Thyroid gland (tissue), 4 donors: ENCODE measurements at regions of chr14 and their contacts with region 1.

Region 1: GRCh38 chr14:64671591-64671990 is 32.6 kb upstream of the PLEKHG3 start:
- DNase-seq: no peak
- H3K4me3 ChIP-seq: no peak overlapping the region
- H3K27ac ChIP-seq: no peak overlapping the region
- H3K4me1 ChIP-seq: peaks cover 0 to 11% of the 10 kb centered on the region in 2 donors
- H3K27me3 ChIP-seq: no peaks in the 10 kb centered on the region
- CTCF ChIP-seq: peak; percentile 22 to 88 (median 76)
- POLR2A ChIP-seq: no peak

Region 2: GRCh38 chr14:64764641-64765520 is 93.3 kb after region 1 on chr14:
- intact Hi-C with region 1: loop called (anchors 2 kb)
- DNase-seq: peak; percentile 65 to 74
- H3K4me3 ChIP-seq: no peak overlapping the region
- H3K27ac ChIP-seq: no peak overlapping the region
- H3K4me1 ChIP-seq: peaks cover 19 to 32% of the 10 kb centered on the region in 2 donors
- H3K27me3 ChIP-seq: no peaks in the 10 kb centered on the region
- CTCF ChIP-seq: peak; percentile 86 to 94 (median 90)
- POLR2A ChIP-seq: no peak

Region 3: GRCh38 chr14:64880221-64881121 is 208.9 kb after region 1 on chr14:
- intact Hi-C with region 1: loop called (anchors 10 kb)
- DNase-seq: peak; percentile 50 to 57
- H3K4me3 ChIP-seq: peak overlapping the region in 2 of 3 donors; percentile 49 to 55
- H3K27ac ChIP-seq: no peak overlapping the region
- H3K4me1 ChIP-seq: peaks cover 0 to 16% of the 10 kb centered on the region in 2 donors
- H3K27me3 ChIP-seq: no peaks in the 10 kb centered on the region
- CTCF ChIP-seq: peak in 1 of 6 experiments; percentile 14
- POLR2A ChIP-seq: peak in 1 of 2 donors; percentile 21